ENCODE measurements at regions of chr6 and their contacts with region 1.

Region 1: DNA sequence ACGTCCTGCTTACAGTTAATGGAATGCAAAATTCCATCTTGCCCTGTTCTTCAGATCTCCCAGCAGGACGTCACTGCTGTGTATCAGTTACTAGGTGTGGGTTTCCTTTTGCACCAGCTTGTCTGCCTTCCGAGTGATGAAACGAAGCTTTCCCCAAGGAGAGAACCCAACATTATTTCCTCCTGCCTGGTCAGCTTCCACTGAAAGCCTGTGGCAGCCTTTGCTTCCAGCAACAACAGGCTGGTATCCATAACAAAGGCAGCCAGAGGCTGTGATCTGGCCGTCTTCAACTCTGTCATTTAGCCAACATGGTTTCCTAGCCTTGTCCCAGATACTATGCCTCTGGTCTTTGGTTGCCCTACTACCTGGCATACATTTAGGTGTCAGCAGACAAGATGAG is 78.9 kb upstream of the HEY2 start:
- DNase-seq: no peak
- ATAC-seq: no peak
- H3K4me3 ChIP-seq: no peak overlapping the region
- H3K4me3 Mint-ChIP-seq: no peak overlapping the region
- H3K27ac ChIP-seq: no peak overlapping the region
- H3K27ac Mint-ChIP-seq: no peak overlapping the region
- H3K4me1 ChIP-seq: no peaks in the 10 kb centered on the region
- H3K4me1 Mint-ChIP-seq: no peaks in the 10 kb centered on the region
- H3K27me3 ChIP-seq: peaks cover 0 to under 1% of the 10 kb centered on the region in 2 experiments
- H3K27me3 Mint-ChIP-seq: peaks cover 11% of the 10 kb centered on the region
- CTCF ChIP-seq: no peak

Region 2: GRCh38 chr6:124795643-124796463 is 874.7 kb before region 1 on chr6:
- CTCF ChIA-PET with region 1: no interaction called
- POLR2A ChIA-PET with region 1: no interaction called
- intact Hi-C with region 1: no loop called
- DNase-seq: no peak
- ATAC-seq: no peak
- H3K4me3 ChIP-seq: no peak overlapping the region
- H3K4me3 Mint-ChIP-seq: no peak overlapping the region
- H3K27ac ChIP-seq: no peak overlapping the region
- H3K27ac Mint-ChIP-seq: no peak overlapping the region
- H3K4me1 ChIP-seq: no peaks in the 10 kb centered on the region
- H3K4me1 Mint-ChIP-seq: no peaks in the 10 kb centered on the region
- H3K27me3 ChIP-seq: no peaks in the 10 kb centered on the region
- H3K27me3 Mint-ChIP-seq: no peaks in the 10 kb centered on the region
- CTCF ChIP-seq: no peak

Region 3: GRCh38 chr6:125512621-125513020 is 157.9 kb before region 1 on chr6:
- CTCF ChIA-PET with region 1: no interaction called
- POLR2A ChIA-PET with region 1: no interaction called
- intact Hi-C with region 1: no loop called
- DNase-seq: peak in 2 of 9 experiments; percentile 3 to 8
- ATAC-seq: no peak
- H3K4me3 ChIP-seq: no peak overlapping the region
- H3K4me3 Mint-ChIP-seq: no peak overlapping the region
- H3K27ac ChIP-seq: no peak overlapping the region
- H3K27ac Mint-ChIP-seq: no peak overlapping the region
- H3K4me1 ChIP-seq: no peaks in the 10 kb centered on the region
- H3K4me1 Mint-ChIP-seq: no peaks in the 10 kb centered on the region
- H3K27me3 ChIP-seq: no peaks in the 10 kb centered on the region
- H3K27me3 Mint-ChIP-seq: peaks cover 5% of the 10 kb centered on the region
- CTCF ChIP-seq: no peak

Region 4: DNA sequence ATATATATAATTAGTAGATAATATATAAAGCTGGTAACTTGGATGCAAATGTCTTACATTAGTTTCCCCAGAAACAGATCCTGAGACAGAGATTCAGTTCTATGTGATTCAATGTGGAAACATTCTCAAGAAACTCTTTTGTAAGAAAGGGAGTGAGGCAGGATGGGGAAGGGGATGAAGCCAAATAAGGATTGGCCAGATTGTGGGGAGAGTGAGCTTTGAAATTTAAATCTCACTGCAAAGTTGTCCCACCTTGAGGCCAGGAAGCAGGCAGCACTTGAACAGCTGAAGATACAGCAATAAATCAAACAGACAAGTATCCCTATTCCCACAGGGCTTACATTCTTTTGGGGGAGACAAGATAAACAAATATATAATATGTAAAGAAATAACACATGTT is 47.5 kb before region 1 on chr6:
- CTCF ChIA-PET with region 1: no interaction called
- POLR2A ChIA-PET with region 1: no interaction called
- intact Hi-C with region 1: loop called in 1 of 2 experiments (anchors 1 kb)
- DNase-seq: no peak
- ATAC-seq: no peak
- H3K4me3 ChIP-seq: no peak overlapping the region
- H3K4me3 Mint-ChIP-seq: no peak overlapping the region
- H3K27ac ChIP-seq: no peak overlapping the region
- H3K27ac Mint-ChIP-seq: no peak overlapping the region
- H3K4me1 ChIP-seq: no peaks in the 10 kb centered on the region
- H3K4me1 Mint-ChIP-seq: no peaks in the 10 kb centered on the region
- H3K27me3 ChIP-seq: peaks cover 0 to 5% of the 10 kb centered on the region in 2 experiments
- H3K27me3 Mint-ChIP-seq: peaks cover 17% of the 10 kb centered on the region
- CTCF ChIP-seq: no peak

Region 5: DNA sequence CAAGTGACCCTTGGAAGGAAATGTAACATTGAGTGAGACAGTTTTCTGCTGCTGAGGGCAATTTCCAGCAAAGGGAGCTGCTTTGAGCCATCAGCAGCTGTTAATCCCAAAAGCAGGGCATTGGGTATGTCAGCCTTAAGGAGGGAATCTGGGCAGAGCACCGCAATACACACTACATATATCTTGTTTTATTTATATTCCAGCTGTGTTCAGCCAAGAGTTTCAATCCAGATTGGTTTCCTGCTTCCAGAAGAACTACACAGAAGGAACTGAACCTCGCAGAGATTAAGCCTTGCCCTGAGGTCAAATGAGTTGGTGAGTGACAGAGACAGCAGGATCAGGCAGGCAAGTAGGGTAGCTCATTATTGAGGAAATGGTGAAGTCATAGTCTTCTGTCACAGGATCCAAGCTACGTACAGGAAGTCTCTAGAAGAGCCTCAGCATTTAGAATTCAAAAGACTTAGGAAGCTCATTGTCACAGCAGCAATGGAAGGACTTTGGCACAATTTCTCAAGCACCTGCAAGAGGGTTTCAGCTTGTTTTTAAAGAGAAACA is 31.0 kb before region 1 on chr6:
- CTCF ChIA-PET with region 1: no interaction called
- POLR2A ChIA-PET with region 1: no interaction called
- intact Hi-C with region 1: no loop called
- DNase-seq: no peak
- ATAC-seq: no peak
- H3K4me3 ChIP-seq: no peak overlapping the region
- H3K4me3 Mint-ChIP-seq: no peak overlapping the region
- H3K27ac ChIP-seq: no peak overlapping the region
- H3K27ac Mint-ChIP-seq: no peak overlapping the region
- H3K4me1 ChIP-seq: no peaks in the 10 kb centered on the region
- H3K4me1 Mint-ChIP-seq: no peaks in the 10 kb centered on the region
- H3K27me3 ChIP-seq: no peaks in the 10 kb centered on the region
- H3K27me3 Mint-ChIP-seq: peaks cover 8% of the 10 kb centered on the region
- CTCF ChIP-seq: no peak

Region 6: GRCh38 chr6:126380072-126380583 is 709.6 kb after region 1 on chr6:
- CTCF ChIA-PET with region 1: no interaction called
- POLR2A ChIA-PET with region 1: no interaction called
- intact Hi-C with region 1: no loop called
- DNase-seq: no peak
- ATAC-seq: no peak
- H3K4me3 ChIP-seq: no peak overlapping the region
- H3K4me3 Mint-ChIP-seq: no peak overlapping the region
- H3K27ac ChIP-seq: no peak overlapping the region
- H3K27ac Mint-ChIP-seq: no peak overlapping the region
- H3K4me1 ChIP-seq: no peaks in the 10 kb centered on the region
- H3K4me1 Mint-ChIP-seq: no peaks in the 10 kb centered on the region
- H3K27me3 ChIP-seq: no peaks in the 10 kb centered on the region
- H3K27me3 Mint-ChIP-seq: no peaks in the 10 kb centered on the region
- CTCF ChIP-seq: no peak

Measured in CD8-positive, alpha-beta T cell (primary cell).